ENCODE measurements at regions of chr4 and their contacts with region 1.

Region 1: GRCh38 chr4:83961575-83961974 is 425.7 kb downstream of the GPAT3 start:
- DNase-seq: no peak
- ATAC-seq: no peak
- H3K4me3 ChIP-seq: no peak overlapping the region
- H3K27ac ChIP-seq: no peak overlapping the region
- H3K4me1 ChIP-seq: no peaks in the 10 kb centered on the region
- H3K27me3 ChIP-seq: no peaks in the 10 kb centered on the region

Region 2: DNA sequence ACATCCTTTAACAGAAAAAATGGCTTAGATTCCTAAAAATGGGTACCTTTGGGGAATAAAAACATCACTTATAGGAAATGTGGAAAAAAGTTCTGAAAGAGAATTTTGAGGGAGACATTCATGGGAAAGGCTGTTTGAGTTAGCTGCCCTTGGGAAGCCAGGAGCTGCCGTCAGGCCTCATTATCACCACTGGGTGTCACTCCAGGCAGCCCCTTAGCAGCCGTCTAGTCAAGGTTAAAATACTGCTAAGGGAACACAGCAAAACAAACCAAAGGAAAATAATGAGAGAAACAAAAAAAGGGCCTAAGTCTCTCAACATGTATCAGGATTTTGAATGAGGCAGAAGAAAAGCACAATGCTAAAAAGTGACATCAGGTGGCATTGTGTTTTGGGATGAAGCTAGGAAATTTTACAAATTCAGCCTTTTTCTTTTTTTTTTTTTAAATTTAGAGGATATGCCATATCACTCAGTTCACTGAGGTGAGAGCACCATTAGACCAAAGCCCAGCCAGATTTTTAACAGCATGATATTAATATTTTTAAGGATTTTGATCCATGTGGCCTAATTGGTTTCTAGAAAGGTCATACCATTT is 190.4 kb before region 1 on chr4:
- intact Hi-C with region 1: loop called in 1 of 4 experiments (anchors 5 kb)
- DNase-seq: peak in 2 of 3 donors; percentile 16 to 59
- ATAC-seq: peak in 1 of 2 donors; percentile 61
- H3K4me3 ChIP-seq: no peak overlapping the region
- H3K27ac ChIP-seq: no peak overlapping the region
- H3K4me1 ChIP-seq: no peaks in the 10 kb centered on the region
- H3K27me3 ChIP-seq: no peaks in the 10 kb centered on the region

Region 3: GRCh38 chr4:84001866-84002569 is 40.4 kb after region 1 on chr4:
- intact Hi-C with region 1: no loop called
- DNase-seq: no peak
- ATAC-seq: no peak
- H3K4me3 ChIP-seq: no peak overlapping the region
- H3K27ac ChIP-seq: no peak overlapping the region
- H3K4me1 ChIP-seq: no peaks in the 10 kb centered on the region
- H3K27me3 ChIP-seq: no peaks in the 10 kb centered on the region

Measured in right cardiac atrium (tissue), 5 donors.